ENCODE measurements at regions of chr13 and their contacts with region 1.

Region 1: GRCh38 chr13:27826379-27827353 is 34.4 kb downstream of the GSX1 start:
- DNase-seq: peak; percentile 65
- ATAC-seq: peak; percentile 53
- H3K4me3 Mint-ChIP-seq: no peak overlapping the region
- H3K27ac Mint-ChIP-seq: no peak overlapping the region
- H3K4me1 Mint-ChIP-seq: peaks cover 6% of the 10 kb centered on the region
- H3K27me3 Mint-ChIP-seq: peaks cover 61% of the 10 kb centered on the region
- CTCF ChIP-seq: peak; percentile 96

Region 2: GRCh38 chr13:26985285-26985878 is 841.3 kb before region 1 on chr13:
- CTCF ChIA-PET with region 1: interaction called, 17 read pairs
- POLR2A ChIA-PET with region 1: no interaction called
- intact Hi-C with region 1: loop called (anchors 1 kb)
- DNase-seq: no peak
- ATAC-seq: peak; percentile 96
- H3K4me3 Mint-ChIP-seq: no peak overlapping the region
- H3K27ac Mint-ChIP-seq: no peak overlapping the region
- H3K4me1 Mint-ChIP-seq: peaks cover 5% of the 10 kb centered on the region
- H3K27me3 Mint-ChIP-seq: peaks cover 6% of the 10 kb centered on the region
- CTCF ChIP-seq: no peak

Region 3: GRCh38 chr13:27374650-27375049 is 452.0 kb before region 1 on chr13:
- CTCF ChIA-PET with region 1: interaction called, 177 read pairs
- POLR2A ChIA-PET with region 1: no interaction called
- intact Hi-C with region 1: loop called (anchors 1 kb)
- DNase-seq: no peak
- ATAC-seq: peak; percentile 88
- H3K4me3 Mint-ChIP-seq: no peak overlapping the region
- H3K27ac Mint-ChIP-seq: no peak overlapping the region
- H3K4me1 Mint-ChIP-seq: peaks cover 2% of the 10 kb centered on the region
- H3K27me3 Mint-ChIP-seq: peaks cover 22% of the 10 kb centered on the region
- CTCF ChIP-seq: peak; percentile 75

Region 4: GRCh38 chr13:27424246-27425157 is 402.2 kb before region 1 on chr13 and contains the start of gene GTF3A:
- CTCF ChIA-PET with region 1: interaction called, 29 read pairs
- POLR2A ChIA-PET with region 1: no interaction called
- intact Hi-C with region 1: no loop called
- DNase-seq: peak; percentile 91
- ATAC-seq: peak; percentile 72
- H3K4me3 Mint-ChIP-seq: peak within 1 kb of the TSS; percentile 79
- H3K27ac Mint-ChIP-seq: peak within 1 kb of the TSS; percentile 86
- H3K4me1 Mint-ChIP-seq: peaks cover 42% of the 10 kb centered on the region
- H3K27me3 Mint-ChIP-seq: no peaks in the 10 kb centered on the region
- CTCF ChIP-seq: no peak
- total RNA-seq, gene GTF3A: 119 and 134 TPM in 2 replicates

Region 5: DNA sequence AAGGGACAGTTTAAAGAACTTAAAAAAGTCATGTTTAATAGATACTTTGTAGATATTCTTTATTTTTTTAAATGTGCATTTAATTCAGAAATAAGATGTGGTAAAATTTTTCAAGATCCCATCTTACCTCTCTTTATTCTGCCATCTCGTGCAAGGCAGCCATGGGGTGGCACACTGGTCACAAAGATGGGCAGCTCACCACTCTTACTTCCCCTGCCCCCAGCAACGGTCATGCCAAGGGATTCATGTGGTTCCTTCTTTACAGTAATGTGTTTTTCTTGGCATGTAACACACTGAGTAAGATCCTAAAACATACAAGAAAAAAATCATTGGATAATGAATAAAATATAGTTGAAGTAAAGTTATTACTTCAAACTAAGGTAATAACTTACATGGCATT is 270.6 kb before region 1 on chr13:
- CTCF ChIA-PET with region 1: interaction called, 12 read pairs
- POLR2A ChIA-PET with region 1: no interaction called
- intact Hi-C with region 1: no loop called
- DNase-seq: no peak
- ATAC-seq: no peak
- H3K4me3 Mint-ChIP-seq: no peak overlapping the region
- H3K27ac Mint-ChIP-seq: no peak overlapping the region
- H3K4me1 Mint-ChIP-seq: no peaks in the 10 kb centered on the region
- H3K27me3 Mint-ChIP-seq: no peaks in the 10 kb centered on the region
- CTCF ChIP-seq: no peak

Region 6: DNA sequence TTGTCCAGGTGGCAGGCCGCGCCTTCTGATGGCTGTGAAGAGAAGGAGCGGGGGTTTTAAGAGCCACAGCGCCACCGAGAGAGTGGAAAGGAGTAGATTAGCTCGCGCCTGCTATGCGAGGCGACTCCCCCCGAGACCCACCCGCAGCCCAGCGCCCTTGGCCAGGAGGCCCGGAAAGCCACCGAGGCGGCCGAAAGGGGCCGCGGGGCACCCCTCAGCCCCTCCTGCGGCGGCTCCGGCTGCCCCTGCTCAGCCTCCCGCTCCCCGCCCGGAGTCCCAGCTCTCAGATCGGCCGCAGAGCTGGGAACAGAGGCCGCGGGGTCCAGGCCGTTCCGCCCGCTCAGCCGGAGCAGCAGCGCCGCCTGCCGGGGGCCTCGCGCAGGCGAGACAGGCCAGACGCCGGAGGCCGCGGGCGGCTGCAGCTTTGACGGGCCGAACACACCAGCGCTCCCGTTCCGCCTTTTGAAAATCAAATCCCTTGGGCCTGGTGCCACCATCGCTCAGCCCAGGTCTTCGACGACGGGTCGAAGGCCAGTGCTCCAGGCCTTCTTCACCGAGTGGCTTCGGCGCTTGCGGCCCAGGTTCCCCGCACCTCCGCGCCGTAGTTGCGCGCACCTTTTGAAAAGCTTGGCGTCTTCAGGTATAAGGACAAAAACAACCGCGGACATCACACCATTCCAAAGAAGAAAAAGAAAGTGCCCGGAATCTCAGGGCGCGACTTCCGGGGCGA is 127.2 kb after region 1 on chr13:
- CTCF ChIA-PET with region 1: interaction called, 72 read pairs
- POLR2A ChIA-PET with region 1: no interaction called
- intact Hi-C with region 1: loop called (anchors 1 kb)
- DNase-seq: peak; percentile 73
- ATAC-seq: peak; percentile 92
- H3K4me3 Mint-ChIP-seq: peak overlapping the region; percentile 77
- H3K27ac Mint-ChIP-seq: peak overlapping the region; percentile 30
- H3K4me1 Mint-ChIP-seq: peaks cover 15% of the 10 kb centered on the region
- H3K27me3 Mint-ChIP-seq: peaks cover 61% of the 10 kb centered on the region
- CTCF ChIP-seq: no peak

Region 7: DNA sequence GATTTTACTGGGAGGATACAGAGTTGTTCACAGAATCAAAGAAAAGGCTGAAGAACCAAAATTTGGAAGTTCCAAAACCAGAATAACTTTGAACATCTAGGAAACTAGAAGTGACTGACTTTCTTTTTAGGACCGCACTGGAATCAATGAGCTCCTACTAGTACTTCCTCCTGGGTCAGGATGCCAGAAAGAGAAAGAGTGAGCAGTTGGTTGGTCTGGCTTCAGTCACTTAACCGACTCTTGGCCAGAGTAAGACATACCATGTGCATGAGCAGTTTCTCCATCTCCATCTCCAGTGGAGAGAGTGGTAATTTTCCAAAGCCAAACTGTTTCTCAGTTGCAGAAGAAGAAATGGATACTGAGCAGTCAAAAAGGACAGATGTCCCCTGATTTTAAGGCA is 966.3 kb after region 1 on chr13:
- CTCF ChIA-PET with region 1: interaction called, 3 read pairs
- POLR2A ChIA-PET with region 1: no interaction called
- intact Hi-C with region 1: loop called (anchors 2 kb)
- DNase-seq: no peak
- ATAC-seq: no peak
- H3K4me3 Mint-ChIP-seq: no peak overlapping the region
- H3K27ac Mint-ChIP-seq: no peak overlapping the region
- H3K4me1 Mint-ChIP-seq: no peaks in the 10 kb centered on the region
- H3K27me3 Mint-ChIP-seq: peaks cover 22% of the 10 kb centered on the region
- CTCF ChIP-seq: no peak